ENCODE measurements at regions of chr15 and their contacts with region 1.

Region 1: DNA sequence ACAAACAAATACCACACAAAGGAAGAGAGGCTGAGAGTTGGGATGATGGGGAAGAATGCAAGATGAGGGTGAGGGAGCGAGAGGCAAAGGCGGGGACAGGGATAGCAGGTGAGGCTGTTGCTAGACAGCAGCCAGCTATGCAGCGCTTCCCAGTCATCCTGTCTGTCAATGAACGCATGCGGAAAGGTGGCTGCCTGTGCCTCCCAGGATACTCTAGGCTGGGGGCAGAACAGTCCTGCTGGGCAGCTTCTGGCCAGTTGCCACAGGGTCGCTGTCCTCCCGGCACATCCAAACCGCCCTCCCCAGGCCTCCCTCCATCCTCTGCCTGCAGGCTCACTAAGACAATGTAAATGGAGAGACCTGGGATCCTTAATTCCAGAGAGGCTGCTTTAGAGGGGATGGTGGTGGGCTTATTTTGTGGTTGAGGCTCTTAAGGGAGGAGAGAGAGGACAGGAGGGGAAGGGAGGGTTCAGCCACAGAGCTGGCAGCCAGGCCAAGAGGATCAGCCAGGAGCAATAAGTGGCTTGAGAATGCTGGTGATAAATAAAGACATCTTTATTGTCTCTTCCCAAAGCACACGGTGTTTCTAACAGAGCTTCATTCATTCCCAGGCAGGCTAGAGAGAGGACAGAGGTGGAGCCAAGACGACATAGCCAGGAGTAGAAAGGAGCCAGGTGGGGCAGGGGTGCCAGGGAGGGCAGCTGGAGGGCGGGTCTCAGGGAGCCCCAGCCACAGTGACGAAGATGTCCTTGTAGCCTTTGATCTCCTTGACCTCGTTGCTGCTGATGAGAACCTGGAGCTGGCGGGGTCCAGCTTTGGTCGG is 9.2 kb upstream of the TGM5 start:
- DNase-seq: no peak
- CTCF ChIP-seq: no peak

Region 2: DNA sequence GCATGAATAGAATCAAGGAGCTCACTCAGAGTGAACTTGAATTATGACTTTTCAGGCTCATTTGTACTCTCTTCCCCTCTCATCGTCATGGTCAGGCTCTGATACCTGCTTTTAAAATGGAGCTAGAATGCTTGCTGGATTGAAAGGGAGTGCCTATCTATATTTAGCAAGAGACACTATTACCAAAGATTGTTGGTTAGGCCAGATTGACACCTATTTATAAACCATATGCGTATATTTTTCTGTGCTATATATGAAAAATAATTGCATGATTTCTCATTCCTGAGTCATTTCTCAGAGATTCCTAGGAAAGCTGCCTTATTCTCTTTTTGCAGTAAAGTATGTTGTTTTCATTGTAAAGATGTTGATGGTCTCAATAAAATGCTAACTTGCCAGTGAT is 81.2 kb before region 1 on chr15:
- in situ Hi-C with region 1: no loop called
- DNase-seq: no peak
- CTCF ChIP-seq: no peak

Region 3: GRCh38 chr15:43225201-43225949 is 50.6 kb before region 1 on chr15:
- in situ Hi-C with region 1: loop called (anchors 5 kb)
- DNase-seq: peak; percentile 84
- CTCF ChIP-seq: peak; percentile 73

Region 4: GRCh38 chr15:43361313-43361903 is 85.5 kb after region 1 on chr15:
- in situ Hi-C with region 1: no loop called
- DNase-seq: no peak
- CTCF ChIP-seq: no peak